CD4-positive, alpha-beta memory T cell (primary cell): ENCODE measurements at regions of chr11 and their contacts with region 1.

Region 1: GRCh38 chr11:62645956-62646824 is at the start of gene GANAB:
- DNase-seq: peak; percentile 95 to 99 (median 97)
- H3K4me3 ChIP-seq: peak within 1 kb of the TSS; percentile 55 to 76
- H3K4me3 Mint-ChIP-seq: peak within 1 kb of the TSS; percentile 93 to 99 (median 95)
- H3K27ac ChIP-seq: peak within 1 kb of the TSS; percentile 92
- H3K27ac Mint-ChIP-seq: peak within 1 kb of the TSS; percentile 84 to 99 (median 97)
- H3K4me1 ChIP-seq: peaks cover 37% of the 10 kb centered on the region
- H3K4me1 Mint-ChIP-seq: peaks cover 14 to 48% (median 26%) of the 10 kb centered on the region in 4 donors
- H3K27me3 ChIP-seq: no peaks in the 10 kb centered on the region
- H3K27me3 Mint-ChIP-seq: no peaks in the 10 kb centered on the region
- total RNA-seq, gene GANAB: 260 to 262 TPM

Region 2: GRCh38 chr11:61679893-61680621 is 966.1 kb before region 1 on chr11 and contains the start of gene DAGLA:
- CTCF ChIA-PET with region 1: no interaction called
- POLR2A ChIA-PET with region 1: no interaction called
- intact Hi-C with region 1: no loop called
- DNase-seq: peak; percentile 71 to 82 (median 72)
- H3K4me3 ChIP-seq: peak within 1 kb of the TSS in 1 of 2 donors; percentile 19
- H3K4me3 Mint-ChIP-seq: peak within 1 kb of the TSS; percentile 69 to 83 (median 75)
- H3K27ac ChIP-seq: no peak within 1 kb of the TSS
- H3K27ac Mint-ChIP-seq: peak within 1 kb of the TSS in 6 of 7 donors; percentile 28 to 91 (median 52)
- H3K4me1 ChIP-seq: peaks cover 22% of the 10 kb centered on the region
- H3K4me1 Mint-ChIP-seq: peaks cover 0 to 14% (median 6%) of the 10 kb centered on the region in 4 donors
- H3K27me3 ChIP-seq: no peaks in the 10 kb centered on the region
- H3K27me3 Mint-ChIP-seq: peaks cover 4 to 16% of the 10 kb centered on the region in 2 donors
- total RNA-seq, gene DAGLA: 0.30 to 0.44 TPM

Region 3: GRCh38 chr11:62601394-62602140 is 44.6 kb before region 1 on chr11 and contains the start of gene MTA2:
- CTCF ChIA-PET with region 1: interaction called, 3 read pairs
- POLR2A ChIA-PET with region 1: interaction called, 10 read pairs
- intact Hi-C with region 1: no loop called
- DNase-seq: peak; percentile 99 to 100 (median 100)
- H3K4me3 ChIP-seq: peak within 1 kb of the TSS; percentile 71 to 82
- H3K4me3 Mint-ChIP-seq: peak within 1 kb of the TSS; percentile 91 to 99 (median 96)
- H3K27ac ChIP-seq: peak within 1 kb of the TSS; percentile 91
- H3K27ac Mint-ChIP-seq: peak within 1 kb of the TSS; percentile 90 to 99 (median 98)
- H3K4me1 ChIP-seq: peaks cover 35% of the 10 kb centered on the region
- H3K4me1 Mint-ChIP-seq: peaks cover 33 to 60% (median 46%) of the 10 kb centered on the region in 4 donors
- H3K27me3 ChIP-seq: no peaks in the 10 kb centered on the region
- H3K27me3 Mint-ChIP-seq: no peaks in the 10 kb centered on the region
- total RNA-seq, gene MTA2: 207 to 210 TPM

Region 4: GRCh38 chr11:62612366-62613290 is 33.6 kb before region 1 on chr11 and contains the starts of genes EML3 and ROM1:
- CTCF ChIA-PET with region 1: interaction called, 5 read pairs
- POLR2A ChIA-PET with region 1: interaction called, 16 read pairs
- intact Hi-C with region 1: loop called (anchors 1 kb)
- DNase-seq: peak; percentile 85 to 88 (median 86)
- H3K4me3 ChIP-seq: peak within 1 kb of the TSS; percentile 73 to 93
- H3K4me3 Mint-ChIP-seq: peak within 1 kb of the TSS; percentile 89 to 100 (median 96)
- H3K27ac ChIP-seq: peak within 1 kb of the TSS; percentile 90
- H3K27ac Mint-ChIP-seq: peak within 1 kb of the TSS; percentile 94 to 98 (median 96)
- H3K4me1 ChIP-seq: peaks cover 59% of the 10 kb centered on the region
- H3K4me1 Mint-ChIP-seq: peaks cover 15 to 53% (median 38%) of the 10 kb centered on the region in 4 donors
- H3K27me3 ChIP-seq: no peaks in the 10 kb centered on the region
- H3K27me3 Mint-ChIP-seq: no peaks in the 10 kb centered on the region
- total RNA-seq, gene EML3: 192 to 201 TPM
- total RNA-seq, gene ROM1: 1.6 to 1.9 TPM

Region 5: DNA sequence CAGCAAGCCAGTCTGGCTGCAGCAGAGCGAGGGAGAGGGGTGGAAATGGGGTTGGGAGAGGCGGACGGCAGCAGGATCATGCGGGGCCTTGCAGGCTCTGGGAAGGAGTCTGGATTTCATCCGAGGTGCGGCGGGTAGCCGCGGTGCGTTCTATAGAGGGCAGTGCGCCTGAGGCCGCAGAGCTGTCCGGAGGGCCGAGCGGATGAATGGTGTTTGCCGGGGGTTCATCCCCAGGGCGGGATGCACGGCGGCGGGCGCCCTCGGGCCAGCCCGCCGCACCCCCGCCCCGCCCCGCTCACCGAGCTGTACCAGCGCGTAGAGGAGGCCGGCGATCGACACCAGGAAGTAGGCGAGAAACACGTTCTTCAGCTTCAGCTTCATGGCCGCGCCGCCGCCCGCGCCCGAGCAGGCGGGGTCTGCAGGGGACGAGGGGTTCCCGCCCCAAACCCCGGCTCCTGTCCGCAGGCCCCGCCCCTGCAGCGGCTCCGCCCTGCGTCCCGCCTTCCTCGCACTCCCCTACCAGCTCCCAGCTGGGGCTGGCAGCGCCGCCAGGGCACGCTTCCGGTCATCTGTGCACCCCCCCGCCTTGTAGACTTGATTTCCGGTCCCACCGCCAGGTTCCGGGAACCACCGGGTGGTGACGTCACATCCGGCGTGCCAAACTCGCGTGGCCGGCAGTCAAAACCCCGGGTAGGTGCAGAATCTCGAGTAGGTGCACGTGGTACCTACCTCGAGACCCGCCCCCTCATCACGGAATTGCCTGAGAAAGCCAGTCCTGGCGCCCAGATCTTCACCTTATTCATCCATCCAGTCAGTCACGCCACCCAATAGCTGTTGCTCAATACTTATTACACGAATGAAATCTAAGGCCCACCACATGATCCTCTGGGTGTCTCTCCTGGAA is 24.4 kb before region 1 on chr11 and contains the start of gene B3GAT3:
- CTCF ChIA-PET with region 1: interaction called, 3 read pairs
- POLR2A ChIA-PET with region 1: interaction called, 28 read pairs
- intact Hi-C with region 1: loop called (anchors 1 kb)
- DNase-seq: peak; percentile 95 to 99 (median 96)
- H3K4me3 ChIP-seq: peak within 1 kb of the TSS; percentile 83 to 89
- H3K4me3 Mint-ChIP-seq: peak within 1 kb of the TSS; percentile 89 to 98 (median 95)
- H3K27ac ChIP-seq: peak within 1 kb of the TSS; percentile 94
- H3K27ac Mint-ChIP-seq: peak within 1 kb of the TSS; percentile 91 to 99 (median 98)
- H3K4me1 ChIP-seq: peaks cover 26% of the 10 kb centered on the region
- H3K4me1 Mint-ChIP-seq: peaks cover 19 to 29% (median 20%) of the 10 kb centered on the region in 4 donors
- H3K27me3 ChIP-seq: no peaks in the 10 kb centered on the region
- H3K27me3 Mint-ChIP-seq: no peaks in the 10 kb centered on the region
- total RNA-seq, gene B3GAT3: 66.3 to 74.3 TPM

Region 6: GRCh38 chr11:62627714-62628113 is 18.5 kb before region 1 on chr11:
- CTCF ChIA-PET with region 1: interaction called, 3 read pairs
- POLR2A ChIA-PET with region 1: interaction called, 28 read pairs
- intact Hi-C with region 1: loop called (anchors 1 kb)
- DNase-seq: no peak
- H3K4me3 ChIP-seq: no peak overlapping the region
- H3K4me3 Mint-ChIP-seq: no peak overlapping the region
- H3K27ac ChIP-seq: no peak overlapping the region
- H3K27ac Mint-ChIP-seq: peak overlapping the region in 6 of 7 donors; percentile 3 to 83 (median 52)
- H3K4me1 ChIP-seq: no peaks in the 10 kb centered on the region
- H3K4me1 Mint-ChIP-seq: peaks cover 0 to 4% (median 2%) of the 10 kb centered on the region in 4 donors
- H3K27me3 ChIP-seq: no peaks in the 10 kb centered on the region
- H3K27me3 Mint-ChIP-seq: no peaks in the 10 kb centered on the region

Region 7: DNA sequence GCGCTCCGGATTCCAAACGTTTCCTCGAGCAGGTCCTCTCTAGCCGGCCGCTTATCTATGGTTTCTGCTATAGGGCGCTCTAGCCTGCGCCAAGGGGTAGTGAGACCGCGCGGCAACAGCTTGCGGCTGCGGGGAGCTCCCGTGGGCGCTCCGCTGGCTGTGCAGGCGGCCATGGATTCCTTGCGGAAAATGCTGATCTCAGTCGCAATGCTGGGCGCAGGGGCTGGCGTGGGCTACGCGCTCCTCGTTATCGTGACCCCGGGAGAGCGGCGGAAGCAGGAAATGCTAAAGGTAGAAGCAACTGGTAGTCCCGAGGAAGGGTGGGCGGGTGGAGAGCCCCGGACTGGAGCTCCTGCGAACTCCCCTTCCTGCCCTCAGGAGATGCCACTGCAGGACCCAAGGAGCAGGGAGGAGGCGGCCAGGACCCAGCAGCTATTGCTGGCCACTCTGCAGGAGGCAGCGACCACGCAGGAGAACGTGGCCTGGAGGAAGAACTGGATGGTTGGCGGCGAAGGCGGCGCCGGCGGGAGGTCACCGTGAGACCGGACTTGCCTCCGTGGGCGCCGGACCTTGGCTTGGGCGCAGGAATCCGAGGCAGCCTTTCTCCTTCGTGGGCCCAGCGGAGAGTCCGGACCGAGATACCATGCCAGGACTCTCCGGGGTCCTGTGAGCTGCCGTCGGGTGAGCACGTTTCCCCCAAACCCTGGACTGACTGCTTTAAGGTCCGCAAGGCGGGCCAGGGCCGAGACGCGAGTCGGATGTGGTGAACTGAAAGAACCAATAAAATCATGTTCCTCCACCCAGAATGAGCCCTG is 25.6 kb after region 1 on chr11 and contains the starts of genes LBHD1 and UQCC3:
- CTCF ChIA-PET with region 1: no interaction called
- POLR2A ChIA-PET with region 1: interaction called, 162 read pairs
- intact Hi-C with region 1: no loop called
- DNase-seq: peak; percentile 68 to 80 (median 75)
- H3K4me3 ChIP-seq: peak within 1 kb of the TSS; percentile 91 to 97
- H3K4me3 Mint-ChIP-seq: peak within 1 kb of the TSS; percentile 93 to 99 (median 99)
- H3K27ac ChIP-seq: peak within 1 kb of the TSS; percentile 74
- H3K27ac Mint-ChIP-seq: peak within 1 kb of the TSS; percentile 89 to 98 (median 97)
- H3K4me1 ChIP-seq: peaks cover 55% of the 10 kb centered on the region
- H3K4me1 Mint-ChIP-seq: peaks cover 14 to 74% (median 43%) of the 10 kb centered on the region in 4 donors
- H3K27me3 ChIP-seq: no peaks in the 10 kb centered on the region
- H3K27me3 Mint-ChIP-seq: no peaks in the 10 kb centered on the region
- total RNA-seq, gene LBHD1: 26.7 to 28.6 TPM
- total RNA-seq, gene UQCC3: 7.2 to 8.5 TPM

Region 8: GRCh38 chr11:62678770-62679696 is 32.8 kb after region 1 on chr11 and contains the start of gene UBXN1:
- CTCF ChIA-PET with region 1: interaction called, 3 read pairs
- POLR2A ChIA-PET with region 1: interaction called, 69 read pairs
- intact Hi-C with region 1: no loop called
- DNase-seq: peak; percentile 80 to 90 (median 82)
- H3K4me3 ChIP-seq: peak within 1 kb of the TSS; percentile 58 to 95
- H3K4me3 Mint-ChIP-seq: peak within 1 kb of the TSS; percentile 87 to 98 (median 92)
- H3K27ac ChIP-seq: peak within 1 kb of the TSS; percentile 98
- H3K27ac Mint-ChIP-seq: peak within 1 kb of the TSS; percentile 86 to 99 (median 95)
- H3K4me1 ChIP-seq: peaks cover 37% of the 10 kb centered on the region
- H3K4me1 Mint-ChIP-seq: peaks cover 16 to 50% (median 31%) of the 10 kb centered on the region in 4 donors
- H3K27me3 ChIP-seq: no peaks in the 10 kb centered on the region
- H3K27me3 Mint-ChIP-seq: no peaks in the 10 kb centered on the region
- total RNA-seq, gene UBXN1: 178 to 185 TPM